ENCODE measurements at regions of chr3 and their contacts with region 1.

Region 1: GRCh38 chr3:41690766-41691563 is 270.9 kb downstream of the ULK4 start:
- DNase-seq: no peak
- H3K4me3 ChIP-seq: no peak overlapping the region
- H3K27ac ChIP-seq: no peak overlapping the region
- H3K4me1 ChIP-seq: no peaks in the 10 kb centered on the region
- H3K27me3 ChIP-seq: no peaks in the 10 kb centered on the region
- CTCF ChIP-seq: no peak
- EP300 ChIP-seq: no peak
- POLR2A ChIP-seq: no peak
- RAD21 ChIP-seq: no peak

Region 2: DNA sequence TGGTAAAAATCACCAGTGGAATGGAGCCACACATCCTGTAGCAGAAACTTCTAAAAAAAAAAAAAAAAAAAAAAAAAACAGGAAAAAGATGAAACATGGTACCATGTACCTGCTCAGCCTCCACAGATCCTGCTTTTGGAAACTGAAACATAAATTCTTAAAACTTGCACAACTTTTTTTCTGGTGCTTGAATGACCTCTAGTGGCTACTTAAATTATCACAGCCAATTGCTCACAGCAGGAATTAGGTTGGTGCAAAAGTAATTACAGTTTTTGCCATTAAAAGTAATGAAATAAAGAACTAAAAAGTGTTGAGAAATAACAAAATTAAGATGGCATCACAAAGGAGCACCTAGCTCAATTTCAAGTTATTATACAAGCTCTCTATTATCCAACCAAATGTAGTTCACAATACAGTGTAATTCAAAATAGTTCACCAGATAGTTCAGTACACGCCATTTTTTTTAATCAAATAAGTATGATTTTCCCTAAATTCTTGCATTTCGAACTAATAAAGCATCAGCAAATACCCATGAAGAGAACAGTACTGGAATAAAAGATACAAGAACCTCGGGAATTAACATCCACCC is 190.4 kb after region 1 on chr3:
- CTCF ChIA-PET with region 1: interaction called, 19 read pairs
- POLR2A ChIA-PET with region 1: no interaction called
- DNase-seq: no peak
- H3K4me3 ChIP-seq: no peak overlapping the region
- H3K27ac ChIP-seq: no peak overlapping the region
- H3K4me1 ChIP-seq: no peaks in the 10 kb centered on the region
- H3K27me3 ChIP-seq: no peaks in the 10 kb centered on the region
- CTCF ChIP-seq: peak in 2 of 3 experiments; percentile 45 to 51; a peak in 2 of 4 replicates
- EP300 ChIP-seq: no peak
- POLR2A ChIP-seq: no peak
- RAD21 ChIP-seq: peak; percentile 74 to 80

Measured in H1 (cell line).